ENCODE measurements at regions of chr7 and their contacts with region 1.

Region 1: DNA sequence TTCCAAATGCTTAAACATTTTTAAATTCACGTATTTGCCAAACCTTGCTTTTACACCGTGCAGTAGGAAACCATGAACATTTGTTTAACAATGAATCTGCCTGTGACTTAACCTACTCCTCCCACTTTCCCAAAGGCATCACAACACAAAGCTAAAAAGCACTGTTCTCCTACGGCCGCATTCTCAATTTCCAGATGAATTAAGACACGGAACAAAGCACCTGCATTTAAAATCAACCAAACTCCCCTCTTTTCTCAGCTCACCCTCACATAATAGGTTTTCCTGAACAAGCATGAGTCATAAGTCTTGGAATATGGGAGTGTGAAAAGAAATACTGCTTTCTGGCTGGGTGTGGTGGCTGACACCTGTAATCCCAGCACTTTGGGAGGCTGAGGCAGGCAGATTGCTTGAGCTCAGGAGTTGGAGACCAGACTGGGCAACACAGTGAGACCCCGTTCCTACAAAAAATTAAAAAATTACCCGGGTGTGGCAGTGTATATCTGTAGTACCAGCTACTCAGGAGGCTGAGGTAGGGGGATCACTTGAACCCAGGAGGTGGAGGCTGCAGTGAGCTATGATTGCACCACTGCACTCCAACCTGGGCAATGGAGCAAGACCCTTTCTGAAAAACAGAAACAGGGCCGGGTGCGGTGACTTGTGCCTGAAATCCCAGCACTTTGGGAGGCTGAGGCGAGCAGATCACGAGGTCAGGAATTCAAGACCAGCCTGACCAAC is 51.7 kb upstream of the CYTH3 start:
- DNase-seq: no peak
- CTCF ChIP-seq: no peak

Region 2: DNA sequence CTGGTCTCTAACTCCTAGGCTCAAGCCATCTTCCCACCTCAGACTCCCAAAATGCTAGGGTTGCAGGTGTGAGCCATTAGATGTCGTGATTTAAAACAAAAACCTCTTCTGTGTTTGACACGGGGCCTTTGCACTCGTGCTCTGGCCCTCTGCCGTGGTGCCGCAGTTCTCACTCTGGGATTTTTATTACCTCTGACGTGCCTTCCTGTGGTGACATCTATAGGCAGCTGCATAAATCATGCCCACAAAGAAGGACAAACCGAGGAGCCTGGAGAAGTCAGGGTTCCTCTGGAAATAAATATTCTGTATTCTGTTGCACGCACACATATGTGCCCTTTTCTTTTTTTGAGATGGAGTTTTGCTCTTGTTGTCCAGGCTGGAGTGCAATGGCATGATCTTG is 469.4 kb before region 1 on chr7:
- CTCF ChIA-PET with region 1: interaction called, 14 read pairs
- POLR2A ChIA-PET with region 1: no interaction called
- DNase-seq: no peak
- CTCF ChIP-seq: no peak

Region 3: DNA sequence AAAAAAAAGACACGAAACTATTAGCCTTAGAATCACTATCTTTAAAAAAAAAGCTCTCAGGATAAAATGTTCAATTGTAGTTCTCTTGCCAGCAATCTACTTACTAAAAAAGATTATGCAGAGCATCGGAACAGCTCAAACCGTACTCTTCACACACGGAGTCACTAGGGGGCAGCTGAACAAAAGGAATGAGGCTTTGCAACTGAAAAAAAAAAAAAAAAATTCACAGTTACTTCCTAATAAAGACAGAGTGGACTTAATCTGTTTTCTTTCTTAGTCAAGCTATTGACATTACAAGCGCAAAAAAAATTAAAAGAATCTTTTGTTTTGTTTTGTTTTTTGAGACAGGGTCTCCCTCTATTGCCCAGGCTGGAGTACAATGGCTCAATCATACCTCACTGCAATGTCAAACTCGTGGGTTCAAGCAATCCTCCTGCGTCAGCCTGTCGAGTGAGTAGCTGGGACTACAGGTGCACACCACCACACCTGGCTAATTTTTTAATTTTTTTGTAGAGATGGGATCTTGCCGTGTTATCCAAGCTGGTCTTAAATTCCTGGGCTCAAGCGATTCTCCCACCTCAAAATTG is 326.8 kb before region 1 on chr7:
- CTCF ChIA-PET with region 1: interaction called, 23 read pairs
- POLR2A ChIA-PET with region 1: no interaction called
- DNase-seq: peak; percentile 45
- CTCF ChIP-seq: peak; percentile 36

Region 4: DNA sequence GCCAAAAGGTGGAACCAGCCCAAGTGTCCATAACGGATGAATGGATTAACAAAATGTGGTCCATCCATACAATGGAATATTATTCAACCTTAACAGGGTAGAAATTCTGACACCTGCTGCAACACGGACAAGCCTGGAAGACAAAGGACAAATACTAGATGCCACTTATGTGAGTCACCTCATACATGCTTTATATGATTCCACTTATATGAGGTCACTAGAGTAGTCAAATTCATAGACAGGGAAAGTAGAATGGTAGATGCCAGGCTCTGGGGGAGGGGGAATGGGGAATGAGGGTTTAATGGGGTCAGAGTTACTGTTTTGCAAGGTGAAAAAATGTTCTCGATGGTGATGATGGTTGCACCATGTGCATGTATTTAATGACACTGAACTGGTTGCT is 17.7 kb before region 1 on chr7:
- CTCF ChIA-PET with region 1: interaction called, 12 read pairs
- POLR2A ChIA-PET with region 1: no interaction called
- DNase-seq: no peak
- CTCF ChIP-seq: no peak

Measured in GM10248 (cell line).